ENCODE measurements at regions of chr4 and their contacts with region 1.

Region 1: GRCh38 chr4:10018818-10019461 is 2.4 kb downstream of the SLC2A9 start:
- DNase-seq: peak; percentile 93
- H3K4me3 Mint-ChIP-seq: peak overlapping the region; percentile 84
- H3K27ac Mint-ChIP-seq: peak overlapping the region; percentile 93
- H3K4me1 Mint-ChIP-seq: peaks cover 6% of the 10 kb centered on the region
- H3K27me3 Mint-ChIP-seq: no peaks in the 10 kb centered on the region

Region 2: GRCh38 chr4:9704551-9705332 is 314.2 kb before region 1 on chr4:
- intact Hi-C with region 1: loop called (anchors 2 kb)
- DNase-seq: no peak
- H3K4me3 Mint-ChIP-seq: no peak overlapping the region
- H3K27ac Mint-ChIP-seq: no peak overlapping the region
- H3K4me1 Mint-ChIP-seq: peaks cover 11% of the 10 kb centered on the region
- H3K27me3 Mint-ChIP-seq: no peaks in the 10 kb centered on the region

Region 3: GRCh38 chr4:9880406-9881197 is 138.3 kb before region 1 on chr4:
- intact Hi-C with region 1: no loop called
- DNase-seq: no peak
- H3K4me3 Mint-ChIP-seq: no peak overlapping the region
- H3K27ac Mint-ChIP-seq: no peak overlapping the region
- H3K4me1 Mint-ChIP-seq: no peaks in the 10 kb centered on the region
- H3K27me3 Mint-ChIP-seq: peaks cover 4% of the 10 kb centered on the region

Region 4: DNA sequence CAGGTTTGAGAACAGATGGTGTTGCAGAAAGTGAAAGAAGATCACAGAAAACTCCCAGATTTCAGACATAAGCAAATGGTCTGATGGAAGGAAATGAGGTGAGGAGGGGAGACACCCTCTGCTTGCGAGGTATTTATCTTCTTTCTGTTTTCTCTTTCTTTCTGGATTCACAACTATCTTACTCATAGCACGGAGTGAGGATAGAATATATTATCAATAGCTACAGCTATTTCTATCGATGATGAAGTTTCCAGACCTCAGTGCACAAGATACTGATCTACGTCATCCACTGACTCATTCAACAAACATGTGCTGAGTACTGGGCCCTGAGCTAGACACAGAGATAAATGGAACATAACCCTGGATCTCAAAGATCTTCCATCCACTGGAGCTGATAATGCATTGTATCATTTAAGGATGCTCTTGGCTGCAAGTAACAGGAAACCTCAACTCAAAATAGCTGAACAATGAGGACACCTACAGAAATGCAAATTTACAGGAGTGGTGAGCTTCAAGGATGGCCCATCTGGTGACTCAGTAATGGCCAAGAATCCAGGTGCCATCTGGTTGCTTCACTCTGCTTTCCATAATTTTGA is 18.9 kb before region 1 on chr4:
- intact Hi-C with region 1: loop called (anchors 2 kb)
- DNase-seq: no peak
- H3K4me3 Mint-ChIP-seq: no peak overlapping the region
- H3K27ac Mint-ChIP-seq: peak overlapping the region; percentile 58
- H3K4me1 Mint-ChIP-seq: peaks cover 58% of the 10 kb centered on the region
- H3K27me3 Mint-ChIP-seq: no peaks in the 10 kb centered on the region

Region 5: DNA sequence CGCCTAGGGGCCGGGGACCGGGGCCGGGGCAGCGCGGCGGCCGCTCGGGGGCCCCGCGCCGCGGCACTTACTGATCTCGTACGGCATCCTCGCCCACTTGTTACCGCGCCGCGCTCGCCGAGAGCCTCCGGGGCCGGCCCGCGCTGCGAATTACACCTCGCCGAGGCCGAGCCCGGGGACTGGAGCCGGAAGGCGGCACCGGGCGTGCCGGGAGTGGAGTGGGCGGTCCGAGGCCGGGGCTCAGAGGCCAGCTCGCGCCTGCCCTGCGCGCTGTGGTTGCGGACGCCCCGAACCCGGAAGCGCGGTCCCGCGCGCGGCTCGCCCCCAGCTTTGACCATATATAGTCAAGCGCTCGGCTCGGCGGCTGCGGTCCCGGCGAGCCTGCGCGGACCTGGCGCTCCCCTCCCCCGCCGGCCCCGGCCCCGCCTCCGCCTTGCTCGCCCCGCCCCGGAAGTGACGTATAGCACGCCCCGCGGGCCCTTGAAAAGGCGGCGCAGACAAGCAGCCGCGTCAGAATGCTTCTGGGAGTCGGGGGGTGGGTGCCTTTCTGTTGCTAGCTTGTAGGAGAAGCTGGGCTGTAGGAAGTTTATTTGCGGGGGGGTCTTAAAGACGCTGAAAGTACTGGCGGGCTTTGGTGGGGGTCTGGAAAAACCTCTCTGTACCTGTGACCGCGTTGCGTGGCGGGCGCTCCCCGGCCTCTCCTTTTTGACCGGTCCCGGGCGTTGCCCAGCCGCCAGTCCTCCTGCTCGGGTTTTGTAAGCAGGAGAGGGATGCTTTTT is 97.8 kb after region 1 on chr4 and contains the start of gene WDR1:
- intact Hi-C with region 1: loop called (anchors 2 kb)
- DNase-seq: peak; percentile 90
- H3K4me3 Mint-ChIP-seq: peak within 1 kb of the TSS; percentile 93
- H3K27ac Mint-ChIP-seq: peak within 1 kb of the TSS; percentile 96
- H3K4me1 Mint-ChIP-seq: peaks cover 65% of the 10 kb centered on the region
- H3K27me3 Mint-ChIP-seq: no peaks in the 10 kb centered on the region
- total RNA-seq, gene WDR1: 387 and 398 TPM in 2 replicates

Region 6: GRCh38 chr4:10157478-10158332 is 138.8 kb after region 1 on chr4:
- intact Hi-C with region 1: no loop called
- DNase-seq: peak; percentile 16
- H3K4me3 Mint-ChIP-seq: no peak overlapping the region
- H3K27ac Mint-ChIP-seq: no peak overlapping the region
- H3K4me1 Mint-ChIP-seq: peaks cover 23% of the 10 kb centered on the region
- H3K27me3 Mint-ChIP-seq: peaks cover 5% of the 10 kb centered on the region

Region 7: GRCh38 chr4:10333942-10334341 is 315.0 kb after region 1 on chr4:
- intact Hi-C with region 1: no loop called
- DNase-seq: no peak
- H3K4me3 Mint-ChIP-seq: no peak overlapping the region
- H3K27ac Mint-ChIP-seq: no peak overlapping the region
- H3K4me1 Mint-ChIP-seq: no peaks in the 10 kb centered on the region
- H3K27me3 Mint-ChIP-seq: peaks cover 4% of the 10 kb centered on the region

Region 8: GRCh38 chr4:10461091-10461849 is 442.3 kb after region 1 on chr4:
- intact Hi-C with region 1: loop called (anchors 2 kb)
- DNase-seq: peak; percentile 75
- H3K4me3 Mint-ChIP-seq: peak overlapping the region; percentile 75
- H3K27ac Mint-ChIP-seq: no peak overlapping the region
- H3K4me1 Mint-ChIP-seq: peaks cover 23% of the 10 kb centered on the region
- H3K27me3 Mint-ChIP-seq: peaks cover 41% of the 10 kb centered on the region